Ovary (tissue), 10 donors: ENCODE measurements at regions of chr10 and their contacts with region 1.

Region 1: DNA sequence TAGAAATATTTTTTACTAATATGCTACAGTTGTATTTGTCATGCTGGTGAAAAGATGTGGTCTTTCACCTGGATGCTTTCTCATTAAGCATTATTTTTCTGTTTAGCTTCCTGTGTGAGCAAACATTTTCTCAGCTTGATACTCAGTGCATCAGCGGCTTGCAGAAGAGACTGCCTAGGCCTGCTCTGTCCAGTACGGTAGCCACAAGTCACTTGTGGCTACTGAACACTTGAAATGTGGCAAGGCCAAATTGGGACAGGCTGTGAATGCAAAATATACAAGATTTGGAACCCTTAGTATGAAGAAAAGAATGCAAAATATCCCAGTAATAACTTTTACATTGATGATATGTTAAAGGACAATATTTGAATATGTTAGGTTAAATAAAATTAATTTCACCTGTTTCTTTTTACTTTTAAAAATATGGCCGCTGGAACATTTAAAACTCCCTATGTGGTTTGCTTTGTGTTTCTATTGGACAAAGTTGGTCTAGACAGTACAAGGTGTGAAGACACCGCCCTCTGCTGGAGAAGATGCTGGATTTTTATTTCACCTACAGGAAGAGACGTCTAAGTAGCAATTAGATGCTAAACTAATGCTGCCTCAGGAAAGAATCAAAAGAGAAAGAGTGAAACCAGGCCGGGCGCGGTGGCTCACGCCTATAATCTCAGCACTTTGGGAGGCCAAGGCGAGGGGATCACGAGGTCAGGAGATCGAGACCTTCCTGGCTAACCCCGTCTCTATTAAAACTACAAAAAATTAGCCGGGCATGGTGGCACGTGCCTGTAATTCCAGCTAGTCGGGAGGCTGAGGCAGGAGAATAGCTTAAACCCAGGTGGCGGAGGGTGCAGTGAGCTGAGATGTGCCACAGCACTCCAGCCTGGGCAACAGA is 5.3 kb downstream of the SRGN start:
- DNase-seq: peak; percentile 59 to 85 (median 65)
- H3K4me3 ChIP-seq: no peak overlapping the region
- H3K27ac ChIP-seq: no peak overlapping the region
- H3K4me1 ChIP-seq: no peaks in the 10 kb centered on the region
- H3K27me3 ChIP-seq: no peaks in the 10 kb centered on the region
- CTCF ChIP-seq: peak in 2 of 3 donors; percentile 69 to 72
- EP300 ChIP-seq: no peak
- POLR2A ChIP-seq: no peak

Region 2: GRCh38 chr10:68955832-68956532 is 137.2 kb before region 1 on chr10 and contains the start of gene DDX21:
- intact Hi-C with region 1: loop called in 1 of 4 experiments (anchors 5 kb)
- DNase-seq: peak; percentile 82 to 88 (median 85)
- H3K4me3 ChIP-seq: peak within 1 kb of the TSS; percentile 93
- H3K27ac ChIP-seq: peak within 1 kb of the TSS; percentile 63 to 80
- H3K4me1 ChIP-seq: peaks cover 9% of the 10 kb centered on the region
- H3K27me3 ChIP-seq: no peaks in the 10 kb centered on the region
- CTCF ChIP-seq: peak; percentile 13 to 65 (median 62)
- EP300 ChIP-seq: no peak
- POLR2A ChIP-seq: peak; percentile 81
- total RNA-seq, gene DDX21: 26.5 to 77.0 (median 41.4) TPM

Region 3: GRCh38 chr10:69004821-69005220 is 88.4 kb before region 1 on chr10:
- intact Hi-C with region 1: loop called in 2 of 4 experiments (anchors 10 kb)
- DNase-seq: no peak
- H3K4me3 ChIP-seq: no peak overlapping the region
- H3K27ac ChIP-seq: no peak overlapping the region
- H3K4me1 ChIP-seq: no peaks in the 10 kb centered on the region
- H3K27me3 ChIP-seq: no peaks in the 10 kb centered on the region
- CTCF ChIP-seq: peak in 1 of 3 donors; percentile 46
- EP300 ChIP-seq: no peak
- POLR2A ChIP-seq: no peak

Region 4: DNA sequence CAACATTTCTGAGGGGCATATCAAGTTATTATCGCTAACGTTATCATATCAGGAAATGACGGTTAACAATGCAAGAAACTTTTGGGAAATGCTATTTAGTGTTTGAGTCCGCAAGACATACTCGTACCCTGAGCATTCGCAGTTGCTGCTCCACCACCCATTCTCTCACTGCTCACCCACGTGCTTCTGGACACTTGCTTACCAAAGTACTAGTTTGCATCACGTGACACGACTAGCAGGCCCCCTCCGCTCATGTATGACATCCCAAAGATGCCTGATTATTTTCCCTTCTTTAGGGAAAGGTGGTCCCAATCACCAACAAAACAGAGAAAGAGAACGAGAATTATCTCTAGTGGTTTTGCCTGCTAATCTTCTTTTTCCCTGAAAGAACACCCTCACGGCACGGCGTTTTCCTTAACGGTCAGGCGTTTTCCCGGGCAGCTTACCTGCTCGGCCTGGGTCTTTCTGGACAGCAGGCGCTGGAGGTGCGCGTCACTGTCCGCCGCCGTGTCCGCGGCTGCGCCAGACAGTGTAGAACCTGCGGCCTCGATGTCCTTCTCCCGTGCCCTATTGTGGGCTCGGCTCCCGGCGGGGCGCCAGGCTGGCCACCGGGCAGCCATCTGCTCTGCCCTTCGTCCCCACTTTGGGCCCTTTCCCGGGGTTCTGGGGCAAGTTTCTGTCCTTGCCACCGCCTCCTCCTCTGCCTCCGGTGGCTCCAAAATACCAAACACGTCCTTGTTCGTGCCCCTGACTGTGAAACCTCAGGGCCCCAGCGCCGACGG is 86.7 kb after region 1 on chr10 and contains the start of gene SUPV3L1:
- intact Hi-C with region 1: no loop called
- DNase-seq: peak; percentile 91 to 93 (median 91)
- H3K4me3 ChIP-seq: peak within 1 kb of the TSS; percentile 71
- H3K27ac ChIP-seq: peak within 1 kb of the TSS; percentile 62 to 96
- H3K4me1 ChIP-seq: peaks cover 3% of the 10 kb centered on the region
- H3K27me3 ChIP-seq: no peaks in the 10 kb centered on the region
- CTCF ChIP-seq: peak in 2 of 3 donors; percentile 30 to 32
- EP300 ChIP-seq: no peak
- POLR2A ChIP-seq: peak; percentile 59
- total RNA-seq, gene SUPV3L1: 21.7 to 39.8 (median 28.4) TPM